Activated T-helper 1 cell treated with anti-CD3 and anti-CD28 coated beads, Interleukin-12 subunit alpha, Interleukin-12 subunit beta, Interleukin-2, Interleukin-4 antibody, amounts not matched to agents 30 ng/mL and 10 ng/mL and 1 ng/mL, durations not matched to agents 14 hours and 24 hours and 36 hours (primary cell): ENCODE measurements at regions of chr22 and their contacts with region 1.

Region 1: GRCh38 chr22:50341977-50342650 is 1.0 kb upstream of the PPP6R2 start:
- DNase-seq: peak; percentile 80
- H3K4me3 Mint-ChIP-seq: peak overlapping the region; percentile 83
- H3K27ac Mint-ChIP-seq: peak overlapping the region; percentile 78
- H3K4me1 Mint-ChIP-seq: peaks cover 11% of the 10 kb centered on the region
- H3K27me3 Mint-ChIP-seq: peaks cover 2% of the 10 kb centered on the region

Region 2: GRCh38 chr22:50148991-50149721 is 193.0 kb before region 1 on chr22:
- intact Hi-C with region 1: loop called (anchors 1 kb)
- DNase-seq: peak; percentile 61
- H3K4me3 Mint-ChIP-seq: no peak overlapping the region
- H3K27ac Mint-ChIP-seq: no peak overlapping the region
- H3K4me1 Mint-ChIP-seq: peaks cover 8% of the 10 kb centered on the region
- H3K27me3 Mint-ChIP-seq: no peaks in the 10 kb centered on the region

Region 3: GRCh38 chr22:50244420-50245213 is 97.5 kb before region 1 on chr22 and contains the start of gene TUBGCP6:
- intact Hi-C with region 1: loop called (anchors 1 kb)
- DNase-seq: peak; percentile 93
- H3K4me3 Mint-ChIP-seq: peak within 1 kb of the TSS; percentile 99
- H3K27ac Mint-ChIP-seq: peak within 1 kb of the TSS; percentile 100
- H3K4me1 Mint-ChIP-seq: peaks cover 26% of the 10 kb centered on the region
- H3K27me3 Mint-ChIP-seq: peaks cover 2% of the 10 kb centered on the region
- total RNA-seq, gene TUBGCP6: 52.1 and 54.6 TPM in 2 replicates

Region 4: GRCh38 chr22:50271519-50271970 is 70.6 kb before region 1 on chr22:
- intact Hi-C with region 1: loop called (anchors 1 kb)
- DNase-seq: peak; percentile 55
- H3K4me3 Mint-ChIP-seq: no peak overlapping the region
- H3K27ac Mint-ChIP-seq: no peak overlapping the region
- H3K4me1 Mint-ChIP-seq: peaks cover 10% of the 10 kb centered on the region
- H3K27me3 Mint-ChIP-seq: peaks cover 8% of the 10 kb centered on the region

Region 5: GRCh38 chr22:50326959-50327710 is 15.0 kb before region 1 on chr22 and contains the start of gene DENND6B:
- intact Hi-C with region 1: loop called (anchors 2 kb)
- DNase-seq: peak; percentile 68
- H3K4me3 Mint-ChIP-seq: peak within 1 kb of the TSS; percentile 86
- H3K27ac Mint-ChIP-seq: peak within 1 kb of the TSS; percentile 78
- H3K4me1 Mint-ChIP-seq: peaks cover 7% of the 10 kb centered on the region
- H3K27me3 Mint-ChIP-seq: peaks cover 21% of the 10 kb centered on the region
- total RNA-seq, gene DENND6B: 1.7 and 2.2 TPM in 2 replicates

Region 6: DNA sequence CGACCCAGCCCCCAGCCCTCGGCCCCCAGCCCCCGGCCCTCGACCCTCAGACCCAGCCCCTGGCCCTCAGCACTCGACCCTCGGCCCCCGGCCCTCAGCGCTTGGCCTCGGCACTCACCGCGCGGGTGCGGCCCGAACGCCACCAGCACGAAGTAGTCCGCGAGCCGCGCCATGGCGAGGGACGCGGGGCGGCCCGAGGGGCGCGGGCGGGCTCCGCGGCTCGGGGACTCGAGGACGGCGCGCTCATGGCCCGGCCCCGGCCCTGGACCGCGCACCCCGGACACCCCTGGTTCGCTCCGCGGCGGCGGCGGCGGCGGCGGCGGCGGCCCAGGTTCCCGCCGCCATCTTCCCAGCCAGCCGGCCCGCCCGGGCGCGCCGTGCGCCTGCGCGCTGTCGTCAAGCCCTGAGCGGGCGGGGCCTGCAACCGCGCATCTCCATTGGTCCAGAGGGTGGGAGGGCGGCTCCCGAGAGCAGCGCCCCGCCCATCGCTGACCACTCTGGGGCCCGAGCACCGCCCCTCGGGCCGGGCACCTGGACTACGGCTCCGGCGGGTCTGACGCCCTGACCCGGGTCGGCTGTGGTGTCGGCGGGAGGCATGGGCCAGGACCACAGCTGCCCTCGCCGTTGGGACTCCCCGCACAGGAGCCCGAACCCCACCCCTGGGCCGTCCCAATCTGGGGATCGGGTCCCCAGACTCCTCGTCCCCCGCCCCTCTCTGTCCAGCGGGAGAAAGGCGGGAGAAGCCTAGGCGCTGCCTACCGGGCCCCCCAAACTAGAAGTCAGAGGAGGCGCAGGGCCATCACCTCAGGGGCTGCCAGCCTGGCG is 132.8 kb after region 1 on chr22 and contains the start of gene SBF1:
- intact Hi-C with region 1: loop called (anchors 2 kb)
- DNase-seq: peak; percentile 87
- H3K4me3 Mint-ChIP-seq: peak within 1 kb of the TSS; percentile 87
- H3K27ac Mint-ChIP-seq: peak within 1 kb of the TSS; percentile 74
- H3K4me1 Mint-ChIP-seq: peaks cover 39% of the 10 kb centered on the region
- H3K27me3 Mint-ChIP-seq: peaks cover 12% of the 10 kb centered on the region
- total RNA-seq, gene SBF1: 113 and 116 TPM in 2 replicates

Region 7: GRCh38 chr22:50627642-50628542 is 285.8 kb after region 1 on chr22 and contains the start of gene ARSA:
- intact Hi-C with region 1: loop called (anchors 1 kb)
- DNase-seq: peak; percentile 78
- H3K4me3 Mint-ChIP-seq: peak within 1 kb of the TSS; percentile 91
- H3K27ac Mint-ChIP-seq: peak within 1 kb of the TSS; percentile 52
- H3K4me1 Mint-ChIP-seq: peaks cover 16% of the 10 kb centered on the region
- H3K27me3 Mint-ChIP-seq: peaks cover 2% of the 10 kb centered on the region
- total RNA-seq, gene ARSA: 26.2 and 27.3 TPM in 2 replicates